GM12878 (cell line): ENCODE measurements at regions of chr1 and their contacts with region 1.

Region 1: GRCh38 chr1:101288491-101288944 is 51.7 kb downstream of the S1PR1 start:
- DNase-seq: peak; percentile 69
- ATAC-seq: peak; percentile 71
- H3K4me3 ChIP-seq: no peak overlapping the region
- H3K27ac ChIP-seq: no peak overlapping the region
- H3K4me1 ChIP-seq: peaks cover 35% of the 10 kb centered on the region
- H3K27me3 ChIP-seq: no peaks in the 10 kb centered on the region
- CTCF ChIP-seq: peak; percentile 79 to 92 (median 90)
- EP300 ChIP-seq: no peak
- POLR2A ChIP-seq: no peak
- RAD21 ChIP-seq: peak; percentile 96

Region 2: GRCh38 chr1:100921109-100921706 is 367.3 kb before region 1 on chr1:
- CTCF ChIA-PET with region 1: interaction called, 91 read pairs
- POLR2A ChIA-PET with region 1: no interaction called
- RAD21 ChIA-PET with region 1: interaction called, 40 read pairs
- SMC1A ChIA-PET with region 1: interaction called, 102 read pairs
- in situ Hi-C with region 1: loop called (anchors 5 kb)
- intact Hi-C with region 1: loop called (anchors 1 kb)
- DNase-seq: no peak
- ATAC-seq: peak; percentile 59
- H3K4me3 ChIP-seq: no peak overlapping the region
- H3K27ac ChIP-seq: no peak overlapping the region
- H3K4me1 ChIP-seq: no peaks in the 10 kb centered on the region
- H3K27me3 ChIP-seq: no peaks in the 10 kb centered on the region
- CTCF ChIP-seq: peak; percentile 39 to 63 (median 39); a peak in 5 of 6 replicates
- EP300 ChIP-seq: no peak
- POLR2A ChIP-seq: no peak
- RAD21 ChIP-seq: peak; percentile 70

Region 3: DNA sequence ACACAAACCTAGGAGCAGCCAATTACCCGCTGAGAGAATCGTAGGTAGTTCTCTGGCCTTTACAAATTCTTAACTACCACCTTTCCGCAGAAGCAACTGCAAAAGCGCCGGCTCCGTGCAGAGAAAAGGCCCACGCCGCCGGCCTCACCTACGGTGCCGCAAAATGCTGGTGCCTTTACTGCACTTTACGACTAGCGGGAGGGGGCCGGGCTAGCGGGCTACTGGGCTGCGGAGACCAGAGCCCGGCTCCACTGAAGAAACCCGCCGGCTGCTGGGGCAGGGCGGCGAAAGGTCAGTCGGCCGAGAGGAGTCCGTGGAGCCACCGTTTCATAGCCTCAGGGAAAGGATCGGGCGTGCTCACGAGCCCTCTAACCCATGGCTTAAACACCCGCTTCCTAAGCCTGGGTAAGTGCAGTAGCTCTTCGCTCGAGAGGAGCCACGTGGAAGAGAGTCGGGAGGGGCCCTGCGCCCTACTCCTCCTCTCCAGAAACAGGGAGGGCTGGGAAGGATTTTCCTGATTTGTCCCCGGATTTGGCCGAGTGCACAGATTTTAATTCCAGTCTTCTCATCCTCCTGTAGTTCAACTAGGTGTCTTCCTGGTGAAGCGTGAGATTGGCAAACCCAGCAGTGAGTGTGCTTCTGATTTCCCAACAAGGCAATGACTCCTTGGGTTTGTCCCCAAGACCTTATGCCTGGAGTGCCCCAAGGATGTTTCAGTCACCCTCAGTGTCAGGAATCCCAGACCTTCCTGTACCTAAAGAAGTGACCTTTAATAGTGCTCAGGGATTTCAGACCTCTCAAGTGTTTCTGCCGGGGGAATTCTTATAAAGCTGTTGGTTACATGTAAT is 262.6 kb before region 1 on chr1 and contains the start of gene DPH5:
- CTCF ChIA-PET with region 1: interaction called, 7 read pairs
- POLR2A ChIA-PET with region 1: no interaction called
- RAD21 ChIA-PET with region 1: interaction called, 4 read pairs
- SMC1A ChIA-PET with region 1: interaction called, 8 read pairs
- in situ Hi-C with region 1: no loop called
- intact Hi-C with region 1: loop called (anchors 2 kb)
- DNase-seq: peak; percentile 66
- ATAC-seq: peak; percentile 88
- H3K4me3 ChIP-seq: peak within 1 kb of the TSS; percentile 74
- H3K27ac ChIP-seq: peak within 1 kb of the TSS; percentile 94
- H3K4me1 ChIP-seq: peaks cover 18% of the 10 kb centered on the region
- H3K27me3 ChIP-seq: no peaks in the 10 kb centered on the region
- CTCF ChIP-seq: no peak
- EP300 ChIP-seq: no peak
- POLR2A ChIP-seq: peak; percentile 98
- RAD21 ChIP-seq: peak; percentile 24; the same call in 1 of the 2 replicates
- polyA plus RNA-seq, gene DPH5: 83.7 to 95.7 TPM

Region 4: DNA sequence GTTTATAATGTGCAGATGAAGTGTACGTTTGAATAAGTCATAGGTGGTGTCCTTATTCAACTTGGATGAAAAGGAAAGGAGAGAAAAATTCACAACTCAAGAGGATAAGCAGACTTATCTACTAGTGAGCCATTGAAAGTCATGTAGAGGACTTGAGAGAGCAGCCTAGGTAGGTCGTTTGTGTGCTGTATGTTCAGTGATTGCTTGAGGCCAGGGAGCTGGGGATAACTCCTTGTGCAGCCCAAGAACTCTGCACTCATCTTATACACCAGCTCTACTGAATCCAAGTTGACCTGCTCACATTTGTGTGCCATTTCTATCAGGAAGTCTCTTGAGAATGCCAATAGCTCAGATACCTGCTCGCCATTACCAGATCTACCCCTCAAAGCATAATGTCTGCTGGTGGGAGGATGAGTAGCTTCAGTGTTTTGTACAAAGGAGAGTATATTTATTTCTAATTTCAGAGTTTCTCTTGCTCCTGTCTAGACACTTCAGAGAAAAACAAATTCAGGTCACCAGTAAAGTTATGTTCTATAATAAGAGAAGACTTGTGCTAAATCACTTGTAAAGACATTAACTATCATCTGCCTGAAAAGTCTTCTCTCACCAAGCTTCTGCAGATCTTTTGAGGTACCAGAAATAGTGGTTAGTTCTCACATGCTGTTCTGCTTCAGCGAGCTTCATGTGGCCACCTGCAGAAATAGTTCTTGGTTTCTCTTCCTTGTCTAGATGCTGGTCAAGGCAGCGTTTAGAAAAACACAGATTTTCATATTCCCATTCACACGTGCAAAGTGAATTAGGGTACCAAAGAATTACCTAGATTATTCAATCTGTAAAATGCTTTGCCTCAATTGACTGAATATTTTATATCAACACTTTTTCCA is 40.9 kb before region 1 on chr1:
- CTCF ChIA-PET with region 1: interaction called, 86 read pairs
- POLR2A ChIA-PET with region 1: no interaction called
- RAD21 ChIA-PET with region 1: interaction called, 13 read pairs
- SMC1A ChIA-PET with region 1: interaction called, 34 read pairs
- in situ Hi-C with region 1: no loop called
- intact Hi-C with region 1: loop called (anchors 2 kb)
- DNase-seq: peak; percentile 94
- ATAC-seq: peak; percentile 93
- H3K4me3 ChIP-seq: peak overlapping the region; percentile 10; the same call in 1 of the 2 replicates
- H3K27ac ChIP-seq: peak overlapping the region; percentile 76
- H3K4me1 ChIP-seq: peaks cover 31% of the 10 kb centered on the region
- H3K27me3 ChIP-seq: no peaks in the 10 kb centered on the region
- CTCF ChIP-seq: no peak
- EP300 ChIP-seq: peak; percentile 37 to 61; a peak in 3 of 4 replicates
- POLR2A ChIP-seq: no peak
- RAD21 ChIP-seq: peak; percentile 35

Region 5: DNA sequence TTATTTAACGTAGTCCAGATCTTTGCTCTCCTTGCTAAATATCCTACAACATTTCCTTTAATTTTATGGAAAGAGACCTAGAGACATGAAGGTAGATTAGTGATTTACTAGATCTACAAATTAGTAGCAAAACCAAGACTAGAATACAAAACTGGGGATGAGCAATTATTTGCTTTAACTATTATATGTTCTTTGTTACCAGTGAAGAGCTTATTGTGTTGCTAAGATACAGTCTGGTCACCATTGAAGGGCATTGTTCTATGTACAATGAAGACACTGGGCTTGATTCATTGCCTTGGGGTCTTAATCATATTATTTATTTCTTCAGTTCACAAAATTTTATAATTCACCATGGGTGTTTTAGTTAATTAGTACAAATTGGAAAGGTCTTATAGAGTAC is 36.6 kb after region 1 on chr1:
- CTCF ChIA-PET with region 1: interaction called, 3 read pairs
- POLR2A ChIA-PET with region 1: no interaction called
- RAD21 ChIA-PET with region 1: interaction called, 3 read pairs
- SMC1A ChIA-PET with region 1: interaction called, 12 read pairs
- in situ Hi-C with region 1: no loop called
- intact Hi-C with region 1: no loop called
- DNase-seq: no peak
- ATAC-seq: no peak
- H3K4me3 ChIP-seq: no peak overlapping the region
- H3K27ac ChIP-seq: no peak overlapping the region
- H3K4me1 ChIP-seq: no peaks in the 10 kb centered on the region
- H3K27me3 ChIP-seq: no peaks in the 10 kb centered on the region
- CTCF ChIP-seq: no peak
- EP300 ChIP-seq: no peak
- POLR2A ChIP-seq: no peak
- RAD21 ChIP-seq: no peak

Region 6: GRCh38 chr1:101438359-101438758 is 149.8 kb after region 1 on chr1:
- CTCF ChIA-PET with region 1: interaction called, 253 read pairs
- POLR2A ChIA-PET with region 1: interaction called, 5 read pairs
- RAD21 ChIA-PET with region 1: interaction called, 118 read pairs
- SMC1A ChIA-PET with region 1: interaction called, 240 read pairs
- in situ Hi-C with region 1: no loop called
- intact Hi-C with region 1: loop called (anchors 1 kb)
- DNase-seq: no peak
- ATAC-seq: peak; percentile 73
- H3K4me3 ChIP-seq: no peak overlapping the region
- H3K27ac ChIP-seq: peak overlapping the region; percentile 90
- H3K4me1 ChIP-seq: peaks cover 46% of the 10 kb centered on the region
- H3K27me3 ChIP-seq: no peaks in the 10 kb centered on the region
- CTCF ChIP-seq: peak; percentile 67 to 86 (median 74)
- EP300 ChIP-seq: no peak
- POLR2A ChIP-seq: no peak
- RAD21 ChIP-seq: peak; percentile 97

Region 7: GRCh38 chr1:101540161-101540560 is 251.6 kb after region 1 on chr1:
- CTCF ChIA-PET with region 1: no interaction called
- POLR2A ChIA-PET with region 1: no interaction called
- RAD21 ChIA-PET with region 1: no interaction called
- SMC1A ChIA-PET with region 1: no interaction called
- in situ Hi-C with region 1: no loop called
- intact Hi-C with region 1: no loop called
- DNase-seq: no peak
- ATAC-seq: no peak; the same call in 2 of the 3 replicates
- H3K4me3 ChIP-seq: no peak overlapping the region
- H3K27ac ChIP-seq: no peak overlapping the region
- H3K4me1 ChIP-seq: no peaks in the 10 kb centered on the region
- H3K27me3 ChIP-seq: no peaks in the 10 kb centered on the region
- CTCF ChIP-seq: no peak
- EP300 ChIP-seq: no peak
- POLR2A ChIP-seq: no peak
- RAD21 ChIP-seq: no peak

Region 8: GRCh38 chr1:101706366-101706765 is 417.8 kb after region 1 on chr1:
- CTCF ChIA-PET with region 1: no interaction called
- POLR2A ChIA-PET with region 1: no interaction called
- RAD21 ChIA-PET with region 1: no interaction called
- SMC1A ChIA-PET with region 1: no interaction called
- in situ Hi-C with region 1: no loop called
- intact Hi-C with region 1: no loop called
- DNase-seq: no peak
- ATAC-seq: no peak
- H3K4me3 ChIP-seq: no peak overlapping the region
- H3K27ac ChIP-seq: no peak overlapping the region
- H3K4me1 ChIP-seq: no peaks in the 10 kb centered on the region
- H3K27me3 ChIP-seq: no peaks in the 10 kb centered on the region
- CTCF ChIP-seq: no peak
- EP300 ChIP-seq: no peak
- POLR2A ChIP-seq: no peak
- RAD21 ChIP-seq: no peak